ENCODE measurements at regions of chr7 and their contacts with region 1.

Region 1: GRCh38 chr7:12686894-12687717 is at the start of gene ARL4A:
- DNase-seq: peak; percentile 98 to 100 (median 99)
- ATAC-seq: peak; percentile 96 to 98 (median 98)
- H3K4me3 ChIP-seq: peak within 1 kb of the TSS; percentile 67 to 97 (median 87)
- H3K27ac ChIP-seq: peak within 1 kb of the TSS; percentile 49 to 93 (median 88)
- H3K4me1 ChIP-seq: peaks cover 0 to 21% (median 12%) of the 10 kb centered on the region in 12 donors
- H3K27me3 ChIP-seq: no peaks in the 10 kb centered on the region
- CTCF ChIP-seq: peak in 11 of 12 donors; percentile 9 to 68 (median 48)
- POLR2A ChIP-seq: peak; percentile 76 to 92
- total RNA-seq, gene ARL4A: 12.8 to 21.4 (median 14.5) TPM

Region 2: GRCh38 chr7:12638851-12639467 is 48.1 kb before region 1 on chr7:
- intact Hi-C with region 1: loop called in 4 of 10 experiments (anchors 1 to 5 kb)
- DNase-seq: no peak
- ATAC-seq: peak in 2 of 4 donors; percentile 36 to 67
- H3K4me3 ChIP-seq: no peak overlapping the region
- H3K27ac ChIP-seq: no peak overlapping the region
- H3K4me1 ChIP-seq: peaks cover 0 to 14% (median 0%) of the 10 kb centered on the region in 12 donors
- H3K27me3 ChIP-seq: peaks cover 0 to 5% (median 0%) of the 10 kb centered on the region in 9 donors
- CTCF ChIP-seq: peak; percentile 55 to 86 (median 68)
- POLR2A ChIP-seq: no peak

Region 3: DNA sequence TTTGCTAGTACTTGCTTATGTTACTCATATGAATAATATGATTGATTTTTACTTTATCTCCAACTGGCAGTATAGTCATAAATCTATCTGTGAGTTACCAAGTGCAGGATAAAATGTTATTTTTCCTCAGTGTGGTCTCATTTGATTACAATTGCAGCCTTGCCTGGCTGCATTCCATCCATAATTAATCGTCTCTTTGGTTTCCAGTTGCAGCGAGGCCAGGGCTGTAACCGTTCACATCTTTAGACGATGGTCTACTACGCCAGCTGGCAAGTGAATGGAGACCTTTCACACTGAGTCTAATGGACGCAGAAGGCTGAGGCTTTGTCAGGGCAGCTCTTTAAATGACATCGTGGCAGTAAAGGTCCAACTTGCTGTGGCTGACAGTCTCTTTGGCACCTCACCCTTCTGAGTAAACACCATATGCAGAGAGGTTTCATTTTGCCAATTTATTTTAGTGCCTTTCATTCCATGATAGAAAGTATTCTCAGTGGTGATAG is 84.3 kb after region 1 on chr7:
- intact Hi-C with region 1: loop called in 5 of 10 experiments (anchors 5 to 10 kb)
- DNase-seq: peak in 4 of 5 donors; percentile 24 to 61 (median 46)
- ATAC-seq: peak; percentile 71 to 97 (median 92)
- H3K4me3 ChIP-seq: peak overlapping the region in 9 of 12 donors; percentile 1 to 35 (median 14)
- H3K27ac ChIP-seq: peak overlapping the region in 10 of 12 donors; percentile 6 to 52 (median 37)
- H3K4me1 ChIP-seq: peaks cover 0 to 31% (median 18%) of the 10 kb centered on the region in 12 donors
- H3K27me3 ChIP-seq: no peaks in the 10 kb centered on the region
- CTCF ChIP-seq: no peak
- POLR2A ChIP-seq: no peak

Region 4: GRCh38 chr7:12929476-12930140 is 242.5 kb after region 1 on chr7:
- intact Hi-C with region 1: loop called in 1 of 10 experiments (anchors 10 kb)
- DNase-seq: no peak
- ATAC-seq: no peak
- H3K4me3 ChIP-seq: no peak overlapping the region
- H3K27ac ChIP-seq: no peak overlapping the region
- H3K4me1 ChIP-seq: peaks cover 0 to 8% (median 0%) of the 10 kb centered on the region in 12 donors
- H3K27me3 ChIP-seq: no peaks in the 10 kb centered on the region
- CTCF ChIP-seq: no peak
- POLR2A ChIP-seq: no peak

Region 5: DNA sequence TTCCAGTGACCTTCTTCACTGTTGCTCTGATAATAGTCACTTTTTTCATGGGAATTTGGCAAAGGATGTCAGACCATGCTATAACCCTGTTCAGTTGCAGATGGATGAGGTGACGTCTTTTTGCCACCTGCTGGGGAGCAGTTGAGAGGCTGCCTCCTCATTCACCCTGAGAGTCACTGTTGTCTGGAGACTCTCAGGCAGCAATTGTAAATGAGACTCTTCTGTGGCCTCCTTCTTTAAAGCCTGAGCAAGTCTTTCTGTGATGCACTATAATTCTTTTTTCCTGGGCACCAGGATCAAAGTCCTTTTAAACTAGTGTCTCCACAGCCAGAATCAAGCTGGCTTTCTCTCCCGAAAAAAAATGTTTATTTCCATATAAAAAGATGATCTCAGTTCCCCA is 345.5 kb after region 1 on chr7:
- intact Hi-C with region 1: loop called in 3 of 10 experiments (anchors 10 kb)
- DNase-seq: no peak
- ATAC-seq: peak in 2 of 4 donors; percentile 49 to 53
- H3K4me3 ChIP-seq: no peak overlapping the region
- H3K27ac ChIP-seq: no peak overlapping the region
- H3K4me1 ChIP-seq: peaks cover 0 to 16% (median 2%) of the 10 kb centered on the region in 12 donors
- H3K27me3 ChIP-seq: no peaks in the 10 kb centered on the region
- CTCF ChIP-seq: peak in 1 of 12 donors; percentile 15
- POLR2A ChIP-seq: no peak

Region 6: GRCh38 chr7:13179102-13179501 is 492.0 kb after region 1 on chr7:
- intact Hi-C with region 1: loop called in 6 of 10 experiments (anchors 2 to 10 kb)
- DNase-seq: no peak
- ATAC-seq: peak in 3 of 4 donors; percentile 45 to 66 (median 57)
- H3K4me3 ChIP-seq: no peak overlapping the region
- H3K27ac ChIP-seq: no peak overlapping the region
- H3K4me1 ChIP-seq: peaks cover 0 to 9% (median 0%) of the 10 kb centered on the region in 12 donors
- H3K27me3 ChIP-seq: no peaks in the 10 kb centered on the region
- CTCF ChIP-seq: peak in 9 of 12 donors; percentile 9 to 52 (median 39)
- POLR2A ChIP-seq: no peak

Measured in heart left ventricle (tissue), 16 donors.